BJ (cell line): ENCODE measurements at regions of chr21 and their contacts with region 1.

Region 1: GRCh38 chr21:37711836-37712568 is 204.3 kb downstream of the KCNJ6 start:
- DNase-seq: no peak
- H3K4me3 ChIP-seq: no peak overlapping the region
- H3K27me3 ChIP-seq: no peaks in the 10 kb centered on the region
- CTCF ChIP-seq: peak; percentile 94

Region 2: GRCh38 chr21:37695111-37695510 is 16.9 kb before region 1 on chr21:
- CTCF ChIA-PET with region 1: interaction called, 27 read pairs
- POLR2A ChIA-PET with region 1: no interaction called
- DNase-seq: no peak
- H3K4me3 ChIP-seq: no peak overlapping the region
- H3K27me3 ChIP-seq: peaks cover 5% of the 10 kb centered on the region
- CTCF ChIP-seq: no peak

Region 3: GRCh38 chr21:37700641-37701202 is 11.3 kb before region 1 on chr21:
- CTCF ChIA-PET with region 1: interaction called, 27 read pairs
- POLR2A ChIA-PET with region 1: no interaction called
- DNase-seq: no peak
- H3K4me3 ChIP-seq: no peak overlapping the region
- H3K27me3 ChIP-seq: peaks cover 7% of the 10 kb centered on the region
- CTCF ChIP-seq: peak; percentile 82

Region 4: GRCh38 chr21:37734846-37735245 is 22.8 kb after region 1 on chr21:
- CTCF ChIA-PET with region 1: interaction called, 12 read pairs
- POLR2A ChIA-PET with region 1: no interaction called
- DNase-seq: no peak
- H3K4me3 ChIP-seq: no peak overlapping the region
- H3K27me3 ChIP-seq: peaks cover 16% of the 10 kb centered on the region
- CTCF ChIP-seq: no peak

Region 5: GRCh38 chr21:37746849-37747248 is 34.8 kb after region 1 on chr21:
- CTCF ChIA-PET with region 1: interaction called, 10 read pairs
- POLR2A ChIA-PET with region 1: no interaction called
- DNase-seq: no peak
- H3K4me3 ChIP-seq: no peak overlapping the region
- H3K27me3 ChIP-seq: peaks cover 3% of the 10 kb centered on the region
- CTCF ChIP-seq: no peak

Region 6: DNA sequence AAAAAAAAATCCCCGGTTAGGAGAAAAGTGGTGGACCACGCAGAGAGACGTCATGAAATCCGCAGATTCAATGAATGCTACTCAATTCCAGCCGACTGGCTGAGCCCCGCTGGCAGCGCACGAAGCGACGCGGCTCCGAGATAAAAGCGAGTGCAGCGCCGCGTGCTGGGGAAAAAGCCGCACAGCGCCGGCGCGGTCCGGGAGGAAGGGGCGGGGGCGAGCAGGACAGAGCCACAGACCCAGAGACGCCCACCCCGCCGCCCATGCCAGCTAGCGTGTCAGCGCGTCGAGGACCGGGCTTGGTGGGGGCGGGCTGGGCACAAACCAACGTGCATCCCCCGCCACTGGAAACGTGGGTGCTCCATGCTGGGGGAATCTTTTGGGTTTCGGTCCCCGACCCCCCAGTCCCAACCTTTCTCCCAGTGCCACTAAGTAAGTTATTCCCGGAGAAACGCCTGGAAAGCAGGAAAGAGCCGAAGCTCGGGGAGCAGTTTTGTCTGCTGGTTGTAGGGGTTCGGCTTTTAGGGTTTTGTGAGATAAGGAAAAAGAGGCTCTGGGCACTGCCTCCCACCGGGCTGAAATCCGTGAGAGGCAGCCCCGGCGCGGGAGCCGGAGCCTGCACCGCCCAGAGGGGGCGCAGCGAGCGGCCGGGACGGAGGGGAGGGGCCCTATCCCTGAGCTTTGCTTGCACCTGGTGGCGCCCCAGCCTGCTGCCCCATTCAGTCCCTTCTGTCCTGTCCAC is 204.5 kb after region 1 on chr21 and contains the start of gene KCNJ6:
- CTCF ChIA-PET with region 1: interaction called, 18 read pairs
- POLR2A ChIA-PET with region 1: no interaction called
- DNase-seq: no peak
- H3K4me3 ChIP-seq: peak within 1 kb of the TSS; percentile 39
- H3K27me3 ChIP-seq: peaks cover 19% of the 10 kb centered on the region
- CTCF ChIP-seq: peak; percentile 89
- polyA plus RNA-seq, gene KCNJ6: 0.01 TPM in 2 replicates

Region 7: DNA sequence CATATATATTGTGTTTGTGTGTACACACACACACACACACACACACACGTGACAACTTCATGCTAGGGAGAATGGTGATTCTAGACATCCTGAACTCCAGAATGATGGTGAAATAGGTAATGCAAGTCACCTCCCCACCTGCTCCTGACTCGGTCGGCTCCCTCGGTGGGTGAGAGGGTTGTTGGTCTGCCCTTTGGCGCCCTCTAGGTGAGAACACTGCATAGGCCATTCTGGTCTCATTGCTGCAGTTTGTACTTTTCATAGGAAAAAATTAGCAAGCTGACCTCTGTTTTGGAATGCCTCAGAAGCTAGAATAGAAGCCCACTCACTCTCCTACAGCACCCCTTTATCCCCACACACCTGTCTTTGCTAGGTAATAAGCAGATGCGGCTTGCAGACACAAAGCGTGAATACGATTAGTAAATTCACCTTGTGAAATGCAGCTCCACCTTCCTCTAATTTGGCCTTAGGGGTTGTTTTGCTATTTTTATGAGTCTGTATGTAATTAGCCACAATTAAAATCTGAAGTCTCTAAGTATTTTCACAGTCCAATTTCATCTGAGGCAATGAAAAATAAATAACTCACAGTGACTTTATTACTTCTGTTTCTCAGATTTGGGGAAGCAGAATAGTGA is 414.8 kb after region 1 on chr21:
- CTCF ChIA-PET with region 1: interaction called, 30 read pairs
- POLR2A ChIA-PET with region 1: no interaction called
- DNase-seq: no peak
- H3K4me3 ChIP-seq: no peak overlapping the region
- H3K27me3 ChIP-seq: no peaks in the 10 kb centered on the region; the same call in 1 of the 2 replicates
- CTCF ChIP-seq: peak; percentile 89